ENCODE measurements at regions of chr12 and their contacts with region 1.

Region 1: DNA sequence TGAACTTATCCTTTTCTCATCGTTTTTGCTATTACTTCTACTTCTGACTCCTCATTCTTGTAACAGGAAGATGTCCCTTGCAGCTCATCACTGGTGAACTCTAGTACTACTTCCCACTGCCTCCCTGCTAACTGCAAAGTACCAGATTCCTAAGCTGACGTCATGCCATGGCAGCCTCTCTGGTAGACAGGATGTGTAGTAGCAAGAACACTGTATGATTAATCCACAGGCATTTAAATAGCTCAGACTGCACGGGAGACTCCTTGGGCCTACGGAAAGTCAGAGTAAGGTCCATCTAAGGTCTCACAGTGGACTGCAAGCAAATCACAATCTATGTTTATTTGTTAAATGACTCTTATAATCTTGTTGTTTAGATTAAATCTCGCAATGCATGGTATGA is 43.5 kb downstream of the DNAI7 start:
- DNase-seq: no peak
- ATAC-seq: no peak
- H3K4me3 Mint-ChIP-seq: no peak overlapping the region
- H3K27ac Mint-ChIP-seq: no peak overlapping the region
- H3K4me1 Mint-ChIP-seq: peaks cover 6% of the 10 kb centered on the region
- H3K27me3 Mint-ChIP-seq: no peaks in the 10 kb centered on the region

Region 2: GRCh38 chr12:23204933-23205778 is 1946.3 kb before region 1 on chr12:
- CTCF ChIA-PET with region 1: no interaction called
- POLR2A ChIA-PET with region 1: no interaction called
- intact Hi-C with region 1: loop called in 1 of 2 experiments (anchors 10 kb)
- DNase-seq: no peak
- ATAC-seq: peak; percentile 51
- H3K4me3 Mint-ChIP-seq: no peak overlapping the region
- H3K27ac Mint-ChIP-seq: no peak overlapping the region
- H3K4me1 Mint-ChIP-seq: no peaks in the 10 kb centered on the region
- H3K27me3 Mint-ChIP-seq: peaks cover 5% of the 10 kb centered on the region

Region 3: DNA sequence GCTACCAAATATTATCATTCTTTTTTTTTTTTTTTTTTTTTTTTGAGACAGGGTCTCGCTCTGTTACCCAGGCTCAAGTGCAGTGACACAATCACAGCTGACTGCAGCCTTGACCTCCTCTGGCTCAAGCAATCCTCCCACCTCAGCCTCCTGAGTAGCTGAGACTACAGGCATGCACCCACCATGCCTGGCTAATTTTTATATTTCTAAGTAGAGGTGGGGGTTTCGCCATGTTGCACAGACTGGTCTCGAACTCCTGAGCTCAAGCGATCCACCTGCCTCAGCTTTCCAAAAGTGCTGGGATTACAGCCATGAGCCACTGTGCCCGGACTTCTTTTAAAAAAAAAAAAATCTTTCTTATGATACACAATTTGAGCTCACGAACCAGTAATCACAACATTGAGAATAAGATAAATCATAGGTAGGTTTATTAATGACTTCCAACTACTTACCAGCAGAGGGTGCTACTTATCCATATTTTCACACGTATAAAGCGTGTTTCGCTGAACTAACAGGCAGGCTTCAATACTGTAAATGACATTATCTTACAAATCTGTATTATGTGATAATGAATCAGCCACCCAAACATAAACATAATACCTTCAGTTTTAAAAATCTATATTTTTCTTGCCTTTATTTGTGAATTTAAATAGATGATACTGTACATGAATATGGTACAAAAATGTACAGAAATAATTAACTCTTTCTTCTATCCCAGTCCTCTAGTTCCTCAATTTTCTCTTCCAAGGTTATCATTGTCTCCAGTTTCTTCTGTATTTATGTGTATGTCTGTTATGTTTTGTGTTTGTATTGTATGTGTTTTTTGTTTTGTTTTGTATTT is 160.0 kb before region 1 on chr12:
- CTCF ChIA-PET with region 1: interaction called, 39 read pairs
- POLR2A ChIA-PET with region 1: no interaction called
- intact Hi-C with region 1: loop called (anchors 1 kb)
- DNase-seq: no peak
- ATAC-seq: peak; percentile 85
- H3K4me3 Mint-ChIP-seq: no peak overlapping the region
- H3K27ac Mint-ChIP-seq: no peak overlapping the region
- H3K4me1 Mint-ChIP-seq: no peaks in the 10 kb centered on the region
- H3K27me3 Mint-ChIP-seq: no peaks in the 10 kb centered on the region

Region 4: GRCh38 chr12:24997970-24998582 is 153.4 kb before region 1 on chr12:
- CTCF ChIA-PET with region 1: interaction called, 39 read pairs
- POLR2A ChIA-PET with region 1: no interaction called
- intact Hi-C with region 1: no loop called
- DNase-seq: no peak
- ATAC-seq: peak; percentile 84
- H3K4me3 Mint-ChIP-seq: no peak overlapping the region
- H3K27ac Mint-ChIP-seq: no peak overlapping the region
- H3K4me1 Mint-ChIP-seq: peaks cover 16% of the 10 kb centered on the region
- H3K27me3 Mint-ChIP-seq: no peaks in the 10 kb centered on the region

Region 5: GRCh38 chr12:25130741-25131188 is 20.7 kb before region 1 on chr12:
- CTCF ChIA-PET with region 1: interaction called, 14 read pairs
- POLR2A ChIA-PET with region 1: no interaction called
- intact Hi-C with region 1: no loop called
- DNase-seq: no peak
- ATAC-seq: no peak
- H3K4me3 Mint-ChIP-seq: no peak overlapping the region
- H3K27ac Mint-ChIP-seq: no peak overlapping the region
- H3K4me1 Mint-ChIP-seq: no peaks in the 10 kb centered on the region
- H3K27me3 Mint-ChIP-seq: no peaks in the 10 kb centered on the region

Region 6: DNA sequence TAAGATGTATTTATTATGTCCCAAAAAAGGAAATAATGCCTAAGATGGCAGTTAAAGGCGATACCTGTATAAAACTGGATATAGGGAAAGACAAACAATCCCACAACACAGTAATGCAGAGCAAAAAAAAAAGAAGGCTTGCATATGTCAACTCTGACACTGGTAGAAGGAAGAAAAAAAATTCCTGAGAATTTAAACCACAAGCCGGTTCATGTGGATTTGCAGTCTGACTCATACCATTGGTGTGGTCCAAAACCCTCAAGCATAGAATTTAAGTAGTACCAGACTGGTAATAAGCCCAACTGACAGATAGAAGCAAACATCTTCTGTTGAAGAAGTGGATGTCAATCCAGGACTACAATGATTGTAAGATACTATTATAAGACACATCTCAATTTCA is 36.3 kb after region 1 on chr12:
- CTCF ChIA-PET with region 1: no interaction called
- POLR2A ChIA-PET with region 1: no interaction called
- intact Hi-C with region 1: no loop called
- DNase-seq: no peak
- ATAC-seq: no peak
- H3K4me3 Mint-ChIP-seq: no peak overlapping the region
- H3K27ac Mint-ChIP-seq: no peak overlapping the region
- H3K4me1 Mint-ChIP-seq: peaks cover 22% of the 10 kb centered on the region
- H3K27me3 Mint-ChIP-seq: no peaks in the 10 kb centered on the region

Region 7: GRCh38 chr12:26863502-26863901 is 1712.0 kb after region 1 on chr12:
- CTCF ChIA-PET with region 1: no interaction called
- POLR2A ChIA-PET with region 1: no interaction called
- intact Hi-C with region 1: no loop called
- DNase-seq: peak; percentile 34
- ATAC-seq: peak; percentile 24
- H3K4me3 Mint-ChIP-seq: no peak overlapping the region
- H3K27ac Mint-ChIP-seq: no peak overlapping the region
- H3K4me1 Mint-ChIP-seq: peaks cover 13% of the 10 kb centered on the region
- H3K27me3 Mint-ChIP-seq: peaks cover 3% of the 10 kb centered on the region